ENCODE measurements at regions of chr10 and their contacts with region 1.

Region 1: DNA sequence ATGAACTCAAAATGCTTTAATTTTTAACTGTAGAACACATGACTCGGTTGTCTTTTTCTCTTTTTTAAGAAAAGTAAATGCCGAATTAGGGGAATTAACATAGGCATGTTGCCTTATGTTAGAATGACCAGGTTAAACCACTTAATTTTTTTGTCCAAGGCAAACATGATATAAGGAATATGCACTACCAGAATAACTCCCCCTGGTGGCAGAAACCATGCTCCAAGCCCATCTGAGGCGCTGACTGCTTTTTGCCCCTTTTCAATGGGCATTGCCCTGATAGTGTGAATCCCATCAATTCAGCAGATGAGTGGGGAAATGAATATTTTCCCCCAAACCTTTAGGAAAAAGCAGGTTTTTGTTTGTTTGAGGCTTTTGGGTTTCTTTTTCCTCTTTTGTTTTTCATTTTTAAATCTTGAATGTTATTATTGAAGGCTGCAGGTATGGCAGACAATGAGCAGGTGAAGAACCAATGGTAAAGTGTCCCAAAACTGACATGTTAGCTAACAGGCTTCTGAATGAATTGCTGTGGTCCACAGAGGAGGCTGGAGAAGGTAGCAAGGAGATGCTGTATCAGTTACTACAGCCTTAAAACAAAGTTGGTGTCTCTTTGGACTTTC is 284.3 kb downstream of the SORCS3 start:
- DNase-seq: no peak
- H3K4me3 ChIP-seq: no peak overlapping the region
- H3K27ac ChIP-seq: no peak overlapping the region
- H3K4me1 ChIP-seq: no peaks in the 10 kb centered on the region
- H3K27me3 ChIP-seq: no peaks in the 10 kb centered on the region
- CTCF ChIP-seq: peak in 2 of 3 experiments; percentile 46 to 57
- EP300 ChIP-seq: no peak
- POLR2A ChIP-seq: no peak

Region 2: DNA sequence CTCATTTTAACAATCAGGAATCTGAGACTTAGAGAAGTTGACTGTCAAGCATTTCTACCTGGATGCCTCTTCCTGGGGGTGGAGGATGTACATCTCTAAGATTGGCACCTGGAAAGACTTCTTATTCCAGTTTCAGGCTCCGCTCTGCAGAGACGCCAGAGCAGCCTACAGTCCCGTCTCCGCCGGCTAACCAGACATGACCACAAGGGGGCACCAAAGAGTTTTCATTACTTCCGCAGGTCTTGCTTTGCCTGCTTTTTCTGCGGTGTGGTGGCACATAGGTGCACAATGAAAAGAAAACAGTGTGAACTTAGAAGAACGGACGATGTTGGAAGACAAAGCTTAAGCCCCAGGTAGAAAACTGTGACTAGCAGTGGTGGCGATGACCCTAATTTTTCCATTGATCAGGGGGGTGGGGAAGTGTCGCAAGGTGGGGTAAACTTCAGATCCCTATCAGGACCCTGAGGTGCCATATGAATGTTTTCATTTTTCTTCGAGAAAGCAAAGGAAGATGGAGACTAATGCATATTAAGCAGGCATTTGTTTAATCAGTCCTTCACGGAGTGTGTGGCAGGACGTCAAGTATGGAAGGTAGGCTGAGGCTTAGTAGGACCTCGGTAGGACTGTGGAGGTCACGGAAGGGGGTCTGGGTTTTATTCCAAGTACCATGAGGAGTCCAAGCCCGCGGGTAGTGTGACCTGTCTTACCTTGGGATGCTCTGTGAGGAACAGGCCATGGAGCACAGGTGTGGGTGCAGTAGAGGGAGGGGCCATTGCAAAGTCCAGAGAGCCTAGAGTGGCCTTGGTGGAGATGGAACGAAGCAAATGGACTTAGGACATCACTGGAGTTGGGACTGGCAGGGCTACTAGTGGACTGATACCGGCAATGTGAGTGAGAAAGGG is 344.3 kb before region 1 on chr10:
- intact Hi-C with region 1: loop called (anchors 10 kb)
- DNase-seq: peak; percentile 92
- H3K4me3 ChIP-seq: no peak overlapping the region
- H3K27ac ChIP-seq: no peak overlapping the region
- H3K4me1 ChIP-seq: peaks cover 0 to 7% (median 0%) of the 10 kb centered on the region in 4 donors
- H3K27me3 ChIP-seq: peaks cover 0 to 23% (median 0%) of the 10 kb centered on the region in 4 donors
- CTCF ChIP-seq: peak; percentile 63 to 91 (median 78)
- EP300 ChIP-seq: no peak
- POLR2A ChIP-seq: no peak

Region 3: GRCh38 chr10:104642658-104643302 is 282.6 kb before region 1 on chr10:
- intact Hi-C with region 1: loop called (anchors 10 kb)
- DNase-seq: peak; percentile 85
- H3K4me3 ChIP-seq: peak overlapping the region; percentile 37 to 48 (median 44)
- H3K27ac ChIP-seq: no peak overlapping the region
- H3K4me1 ChIP-seq: peaks cover 0 to 50% (median 44%) of the 10 kb centered on the region in 4 donors
- H3K27me3 ChIP-seq: peaks cover 0 to 74% (median 14%) of the 10 kb centered on the region in 4 donors
- CTCF ChIP-seq: peak; percentile 21 to 37 (median 37)
- EP300 ChIP-seq: no peak
- POLR2A ChIP-seq: no peak

Region 4: GRCh38 chr10:104784452-104784851 is 140.9 kb before region 1 on chr10:
- intact Hi-C with region 1: no loop called
- DNase-seq: no peak
- H3K4me3 ChIP-seq: no peak overlapping the region
- H3K27ac ChIP-seq: no peak overlapping the region
- H3K4me1 ChIP-seq: no peaks in the 10 kb centered on the region
- H3K27me3 ChIP-seq: no peaks in the 10 kb centered on the region
- CTCF ChIP-seq: no peak
- EP300 ChIP-seq: no peak
- POLR2A ChIP-seq: no peak

Measured in esophagus muscularis mucosa (tissue), 4 donors.